ENCODE measurements at regions of chr1 and their contacts with region 1.

Region 1: GRCh38 chr1:81549604-81550127 is 251.1 kb upstream of the ADGRL2 start:
- DNase-seq: peak; percentile 35
- ATAC-seq: peak; percentile 78
- H3K4me3 ChIP-seq: no peak overlapping the region
- H3K27ac ChIP-seq: peak overlapping the region; percentile 14
- H3K4me1 ChIP-seq: peaks cover 32% of the 10 kb centered on the region
- H3K27me3 ChIP-seq: no peaks in the 10 kb centered on the region
- CTCF ChIP-seq: peak; percentile 58 to 67 (median 63)
- EP300 ChIP-seq: peak in 1 of 2 experiments; percentile 41; a peak in 1 of 4 replicates
- POLR2A ChIP-seq: no peak
- RAD21 ChIP-seq: peak; percentile 78

Region 2: DNA sequence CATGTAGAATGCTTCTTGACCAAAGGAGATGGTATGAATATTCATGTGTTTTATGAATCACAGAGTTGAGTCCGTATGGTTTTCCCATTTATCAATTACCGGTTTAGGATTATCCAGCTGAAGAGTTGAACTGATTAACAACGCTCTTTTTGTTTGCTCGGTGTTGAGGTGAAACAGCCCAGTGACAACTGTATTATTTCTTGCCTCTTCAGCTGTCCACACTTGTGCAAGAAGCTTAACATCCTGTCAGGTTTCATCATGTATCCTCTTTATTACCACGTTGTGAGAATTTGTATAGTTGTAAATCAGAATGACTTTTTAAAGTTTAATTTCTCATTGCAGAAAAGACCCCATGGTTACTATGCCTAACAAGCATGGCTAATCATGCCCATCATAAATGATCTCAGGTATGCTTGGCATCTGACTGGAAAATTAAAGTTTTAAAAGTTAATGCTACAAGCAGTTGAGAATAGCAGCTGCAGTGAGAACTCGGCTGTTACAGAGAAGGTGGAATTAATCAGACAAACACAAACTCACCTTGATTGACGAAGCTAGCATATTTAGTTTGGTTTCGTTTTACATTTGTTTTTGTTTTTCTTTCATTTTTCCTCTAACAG is 312.1 kb before region 1 on chr1:
- CTCF ChIA-PET with region 1: no interaction called
- POLR2A ChIA-PET with region 1: no interaction called
- RAD21 ChIA-PET with region 1: no interaction called
- SMC1A ChIA-PET with region 1: no interaction called
- in situ Hi-C with region 1: no loop called
- intact Hi-C with region 1: no loop called
- DNase-seq: no peak
- ATAC-seq: no peak
- H3K4me3 ChIP-seq: peak overlapping the region; percentile 43; the same call in 1 of the 2 replicates
- H3K27ac ChIP-seq: no peak overlapping the region
- H3K4me1 ChIP-seq: no peaks in the 10 kb centered on the region
- H3K27me3 ChIP-seq: no peaks in the 10 kb centered on the region
- CTCF ChIP-seq: no peak
- EP300 ChIP-seq: no peak
- POLR2A ChIP-seq: no peak
- RAD21 ChIP-seq: no peak

Region 3: DNA sequence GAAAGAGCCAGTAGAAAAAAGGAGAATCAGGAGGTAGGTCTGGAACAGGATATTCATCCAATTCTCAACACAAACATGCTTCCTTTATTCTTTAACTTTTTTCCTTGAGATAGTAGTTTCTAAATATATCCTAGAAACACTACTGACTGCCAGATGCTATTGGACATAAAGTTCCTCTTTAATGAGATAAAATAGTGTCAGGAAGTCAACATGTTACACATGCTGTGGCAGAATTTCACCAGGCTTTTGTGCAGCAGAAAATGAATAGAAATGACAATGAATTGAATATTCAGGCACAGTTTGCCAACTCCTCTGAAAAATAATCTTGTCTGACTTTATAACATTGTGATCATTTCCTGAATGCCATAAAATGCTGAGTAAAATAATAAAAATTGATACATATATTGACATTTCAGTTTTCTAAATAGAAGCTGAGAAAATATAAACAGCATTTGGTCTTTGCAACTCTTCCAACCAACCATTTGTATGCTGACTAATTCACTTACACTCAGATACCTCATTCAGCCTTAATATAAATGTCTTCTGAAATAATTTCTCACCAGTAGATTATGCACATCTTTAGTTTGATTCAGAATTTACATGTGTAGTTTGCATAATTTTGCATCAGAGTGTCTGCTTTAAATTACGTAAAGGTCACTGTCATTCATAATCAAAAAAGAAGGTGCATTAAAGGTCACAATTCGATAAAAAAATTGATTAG is 235.0 kb before region 1 on chr1:
- CTCF ChIA-PET with region 1: no interaction called
- POLR2A ChIA-PET with region 1: no interaction called
- RAD21 ChIA-PET with region 1: no interaction called
- SMC1A ChIA-PET with region 1: no interaction called
- in situ Hi-C with region 1: no loop called
- intact Hi-C with region 1: no loop called
- DNase-seq: no peak
- ATAC-seq: no peak
- H3K4me3 ChIP-seq: no peak overlapping the region
- H3K27ac ChIP-seq: no peak overlapping the region
- H3K4me1 ChIP-seq: no peaks in the 10 kb centered on the region
- H3K27me3 ChIP-seq: peaks cover 0 to 3% of the 10 kb centered on the region in 2 experiments; a peak in 1 of 4 replicates
- CTCF ChIP-seq: no peak
- EP300 ChIP-seq: no peak
- POLR2A ChIP-seq: no peak
- RAD21 ChIP-seq: no peak

Region 4: DNA sequence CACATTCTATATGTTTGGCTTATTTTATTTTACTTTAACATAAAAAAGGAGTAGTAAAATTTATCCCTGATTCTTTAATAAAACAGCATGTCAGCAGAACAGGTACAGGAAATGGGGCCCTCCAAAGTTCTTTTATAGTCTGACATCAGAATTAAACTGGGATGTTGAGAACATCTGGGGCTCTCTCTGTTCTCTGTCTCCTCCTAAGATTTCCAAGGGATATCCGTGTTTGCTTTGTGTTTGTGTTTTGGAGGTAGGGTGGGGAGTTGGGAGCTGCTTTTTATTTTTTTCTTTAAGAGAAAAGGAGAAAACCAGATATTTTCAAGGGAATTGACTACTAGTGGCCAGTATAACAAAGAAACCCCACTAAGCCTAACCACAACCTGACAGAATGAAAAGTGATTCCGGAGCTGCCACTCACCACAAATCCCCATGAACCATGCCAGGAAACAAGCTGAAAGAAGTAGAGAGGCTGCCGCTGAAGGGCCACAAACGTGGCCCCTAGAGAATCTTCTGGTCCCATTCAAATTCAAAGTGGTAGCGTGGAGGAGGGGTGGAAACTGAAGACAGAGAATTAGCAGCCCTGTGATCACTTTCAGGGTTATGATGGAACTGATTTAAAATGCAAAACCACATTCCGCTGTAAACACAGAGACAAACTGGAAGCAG is 118.6 kb before region 1 on chr1:
- CTCF ChIA-PET with region 1: interaction called, 3 read pairs
- POLR2A ChIA-PET with region 1: interaction called, 4 read pairs
- RAD21 ChIA-PET with region 1: no interaction called
- SMC1A ChIA-PET with region 1: no interaction called
- in situ Hi-C with region 1: no loop called
- intact Hi-C with region 1: loop called (anchors 5 kb)
- DNase-seq: peak; percentile 12
- ATAC-seq: peak; percentile 49; the same call in 2 of the 3 replicates
- H3K4me3 ChIP-seq: no peak overlapping the region
- H3K27ac ChIP-seq: no peak overlapping the region
- H3K4me1 ChIP-seq: no peaks in the 10 kb centered on the region
- H3K27me3 ChIP-seq: no peaks in the 10 kb centered on the region; a peak in 1 of 4 replicates
- CTCF ChIP-seq: no peak
- EP300 ChIP-seq: no peak
- POLR2A ChIP-seq: no peak
- RAD21 ChIP-seq: no peak

Region 5: GRCh38 chr1:81594211-81594610 is 44.5 kb after region 1 on chr1:
- CTCF ChIA-PET with region 1: interaction called, 63 read pairs
- POLR2A ChIA-PET with region 1: interaction called, 6 read pairs
- RAD21 ChIA-PET with region 1: interaction called, 77 read pairs
- SMC1A ChIA-PET with region 1: interaction called, 210 read pairs
- in situ Hi-C with region 1: no loop called
- intact Hi-C with region 1: loop called (anchors 1 kb)
- DNase-seq: no peak
- ATAC-seq: no peak
- H3K4me3 ChIP-seq: no peak overlapping the region
- H3K27ac ChIP-seq: no peak overlapping the region
- H3K4me1 ChIP-seq: peaks cover 9% of the 10 kb centered on the region
- H3K27me3 ChIP-seq: no peaks in the 10 kb centered on the region
- CTCF ChIP-seq: no peak
- EP300 ChIP-seq: no peak
- POLR2A ChIP-seq: no peak
- RAD21 ChIP-seq: no peak

Region 6: DNA sequence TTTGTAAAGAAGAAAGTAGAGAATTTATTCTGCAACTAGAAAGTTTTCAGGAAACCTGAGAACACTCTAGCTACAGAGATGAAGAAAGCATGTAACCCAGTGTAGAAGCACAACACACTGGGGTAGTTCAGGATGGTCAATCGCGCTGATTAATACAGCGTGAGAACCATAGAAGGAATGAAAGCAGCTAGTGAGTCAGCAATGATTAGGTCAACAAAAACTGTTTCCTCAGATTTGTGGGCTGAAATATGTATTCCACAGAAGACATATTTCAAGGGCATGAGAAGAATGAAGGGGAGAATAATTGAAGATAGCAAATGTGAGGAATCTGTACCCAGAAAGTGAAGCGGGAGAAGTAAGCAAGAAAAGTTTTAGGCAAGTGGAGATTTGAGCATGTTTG is 153.2 kb after region 1 on chr1:
- CTCF ChIA-PET with region 1: interaction called, 10 read pairs
- POLR2A ChIA-PET with region 1: no interaction called
- RAD21 ChIA-PET with region 1: interaction called, 6 read pairs
- SMC1A ChIA-PET with region 1: interaction called, 18 read pairs
- in situ Hi-C with region 1: no loop called
- intact Hi-C with region 1: loop called (anchors 5 kb)
- DNase-seq: no peak
- ATAC-seq: peak; percentile 86
- H3K4me3 ChIP-seq: no peak overlapping the region
- H3K27ac ChIP-seq: no peak overlapping the region
- H3K4me1 ChIP-seq: no peaks in the 10 kb centered on the region
- H3K27me3 ChIP-seq: no peaks in the 10 kb centered on the region
- CTCF ChIP-seq: no peak
- EP300 ChIP-seq: no peak
- POLR2A ChIP-seq: no peak
- RAD21 ChIP-seq: no peak

Region 7: DNA sequence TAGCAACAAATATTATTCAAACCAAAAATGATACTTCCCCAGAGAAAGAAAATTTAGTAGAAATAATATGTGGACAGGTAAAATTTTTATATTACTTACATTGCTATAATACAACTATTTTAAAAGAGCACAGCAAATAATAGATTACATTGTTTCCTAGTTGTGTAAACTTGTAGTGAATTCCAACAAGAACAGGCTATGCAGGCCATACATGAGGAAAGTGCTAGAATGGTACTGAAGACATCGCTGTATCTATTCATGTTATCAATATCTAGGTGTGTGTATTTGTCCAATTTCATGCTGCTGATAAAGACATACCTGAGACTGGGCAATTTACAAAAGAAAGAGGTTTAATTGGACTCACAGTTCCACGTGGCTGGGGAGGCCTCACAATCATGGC is 203.2 kb after region 1 on chr1:
- CTCF ChIA-PET with region 1: interaction called, 340 read pairs
- POLR2A ChIA-PET with region 1: no interaction called
- RAD21 ChIA-PET with region 1: interaction called, 296 read pairs
- SMC1A ChIA-PET with region 1: interaction called, 407 read pairs
- in situ Hi-C with region 1: no loop called
- intact Hi-C with region 1: no loop called
- DNase-seq: no peak
- ATAC-seq: no peak
- H3K4me3 ChIP-seq: no peak overlapping the region
- H3K27ac ChIP-seq: no peak overlapping the region
- H3K4me1 ChIP-seq: no peaks in the 10 kb centered on the region
- H3K27me3 ChIP-seq: no peaks in the 10 kb centered on the region
- CTCF ChIP-seq: no peak
- EP300 ChIP-seq: no peak
- POLR2A ChIP-seq: no peak
- RAD21 ChIP-seq: no peak

Region 8: DNA sequence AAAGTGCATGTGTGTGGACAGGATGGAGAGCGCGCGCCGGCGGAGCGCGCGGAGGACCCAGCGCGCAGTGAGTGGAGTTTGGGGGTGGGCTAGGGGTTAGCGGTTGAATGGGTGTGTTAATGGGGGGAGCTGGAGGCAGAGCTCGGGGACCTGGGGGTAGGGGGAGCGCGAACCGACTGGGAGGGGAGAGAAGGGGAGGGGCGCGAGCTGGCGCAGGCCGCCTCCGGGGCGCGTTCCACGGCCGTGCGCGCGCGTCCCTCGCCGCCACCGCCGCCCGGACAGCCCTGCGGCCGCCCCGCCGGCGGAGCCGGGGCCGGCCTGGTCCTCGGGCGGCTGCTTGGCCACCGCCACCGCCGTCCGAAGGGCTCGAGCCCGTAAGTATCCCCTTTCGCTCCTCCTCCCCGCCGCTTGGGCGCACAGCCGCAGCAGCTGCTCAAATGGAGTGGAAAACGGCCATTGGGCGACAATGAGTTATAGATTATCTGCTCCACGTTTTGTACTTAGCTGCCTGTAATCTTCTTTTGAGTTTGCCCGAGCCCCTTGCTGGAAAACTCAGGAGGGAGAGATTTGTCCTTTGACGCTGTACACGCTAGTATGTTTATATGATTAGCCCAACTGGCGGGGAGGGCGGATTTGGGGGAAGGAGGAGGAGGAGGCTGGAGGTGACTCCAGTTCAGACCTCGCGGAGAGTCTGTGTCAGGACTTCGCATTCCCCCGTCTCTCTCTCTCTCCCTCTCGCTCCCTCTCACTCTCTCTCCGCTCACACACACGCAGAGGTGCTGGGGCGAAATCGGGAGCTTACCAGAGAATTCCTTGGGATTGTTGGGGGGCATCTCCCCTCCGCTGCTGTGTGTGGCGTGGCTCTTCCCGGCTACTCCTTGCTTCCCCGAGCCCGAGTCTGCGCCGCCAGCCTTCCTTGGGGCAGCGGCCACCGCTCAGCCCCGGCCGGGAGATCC is 251.3 kb after region 1 on chr1 and contains the start of gene ADGRL2:
- CTCF ChIA-PET with region 1: interaction called, 36 read pairs
- POLR2A ChIA-PET with region 1: no interaction called
- RAD21 ChIA-PET with region 1: interaction called, 28 read pairs
- SMC1A ChIA-PET with region 1: interaction called, 16 read pairs
- in situ Hi-C with region 1: no loop called
- intact Hi-C with region 1: loop called (anchors 2 kb)
- DNase-seq: no peak
- ATAC-seq: peak; percentile 76
- H3K4me3 ChIP-seq: no peak within 1 kb of the TSS
- H3K27ac ChIP-seq: no peak within 1 kb of the TSS
- H3K4me1 ChIP-seq: no peaks in the 10 kb centered on the region
- H3K27me3 ChIP-seq: peaks cover 10 to 11% of the 10 kb centered on the region in 2 experiments
- CTCF ChIP-seq: no peak
- EP300 ChIP-seq: no peak
- POLR2A ChIP-seq: no peak
- RAD21 ChIP-seq: no peak
- polyA plus RNA-seq, gene ADGRL2: 0.03 to 0.18 TPM